Mammary epithelial cell (primary cell): ENCODE measurements at regions of chr1 and their contacts with region 1.

Region 1: DNA sequence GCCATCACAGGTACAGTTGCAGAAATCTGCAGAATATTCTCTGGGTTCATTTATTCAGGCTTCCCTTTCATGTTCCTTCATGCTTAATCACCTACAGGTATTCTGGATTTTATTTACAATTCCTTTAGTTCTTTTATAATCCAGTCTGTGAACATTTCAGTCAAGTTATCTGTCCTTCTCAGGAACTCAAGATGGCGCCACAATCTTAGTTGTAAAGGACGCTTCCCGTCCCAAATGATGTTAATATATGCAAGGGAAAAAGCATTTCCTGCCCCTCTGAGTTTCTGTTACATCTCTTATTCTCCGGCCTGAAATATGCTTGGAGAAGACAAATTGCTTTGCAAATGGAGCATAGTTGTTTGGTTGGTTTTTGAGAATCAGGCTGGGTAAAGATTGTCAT is 19.3 kb downstream of the F3 start:
- DNase-seq: peak; percentile 48
- H3K4me3 ChIP-seq: no peak overlapping the region
- H3K27ac ChIP-seq: no peak overlapping the region
- H3K4me1 ChIP-seq: no peaks in the 10 kb centered on the region
- H3K27me3 ChIP-seq: no peaks in the 10 kb centered on the region
- CTCF ChIP-seq: peak; percentile 43 to 57

Region 2: GRCh38 chr1:93827633-93828366 is 694.5 kb before region 1 on chr1:
- CTCF ChIA-PET with region 1: no interaction called
- dilution Hi-C with region 1: no loop called
- in situ Hi-C with region 1: no loop called
- intact Hi-C with region 1: no loop called
- DNase-seq: no peak
- H3K4me3 ChIP-seq: no peak overlapping the region
- H3K27ac ChIP-seq: no peak overlapping the region
- H3K4me1 ChIP-seq: peaks cover 28% of the 10 kb centered on the region
- H3K27me3 ChIP-seq: no peaks in the 10 kb centered on the region
- CTCF ChIP-seq: no peak

Region 3: GRCh38 chr1:94202241-94202640 is 320.1 kb before region 1 on chr1:
- CTCF ChIA-PET with region 1: no interaction called
- dilution Hi-C with region 1: no loop called
- in situ Hi-C with region 1: no loop called
- intact Hi-C with region 1: no loop called
- DNase-seq: peak; percentile 41
- H3K4me3 ChIP-seq: no peak overlapping the region
- H3K27ac ChIP-seq: no peak overlapping the region
- H3K4me1 ChIP-seq: peaks cover 6% of the 10 kb centered on the region
- H3K27me3 ChIP-seq: no peaks in the 10 kb centered on the region
- CTCF ChIP-seq: no peak

Region 4: GRCh38 chr1:94471271-94471670 is 51.0 kb before region 1 on chr1:
- CTCF ChIA-PET with region 1: no interaction called
- dilution Hi-C with region 1: loop called (anchors 10 kb)
- in situ Hi-C with region 1: no loop called
- intact Hi-C with region 1: no loop called
- DNase-seq: no peak
- H3K4me3 ChIP-seq: no peak overlapping the region
- H3K27ac ChIP-seq: no peak overlapping the region
- H3K4me1 ChIP-seq: no peaks in the 10 kb centered on the region
- H3K27me3 ChIP-seq: no peaks in the 10 kb centered on the region
- CTCF ChIP-seq: no peak

Region 5: DNA sequence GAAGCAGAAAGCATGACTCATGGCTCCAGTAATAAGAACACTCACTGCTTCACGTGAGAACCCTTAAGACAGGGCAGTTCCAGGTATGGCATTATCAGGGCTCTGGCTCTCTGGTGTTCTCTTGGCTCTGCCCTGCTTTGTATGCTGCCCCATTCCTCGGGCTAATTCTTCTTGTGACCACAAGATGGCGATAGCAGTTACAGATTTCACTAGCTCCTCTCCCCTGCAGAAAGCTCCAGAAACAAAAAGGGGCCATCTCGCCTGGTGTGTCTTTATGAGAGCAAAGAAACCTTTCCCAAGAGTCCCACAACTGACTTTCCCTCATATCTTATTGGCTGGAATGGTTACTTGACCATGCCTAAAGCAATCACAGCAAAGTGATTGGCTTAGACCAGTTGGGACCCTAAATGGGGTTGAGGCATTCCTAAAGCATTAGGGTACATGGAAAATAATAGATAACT is 40.8 kb before region 1 on chr1:
- CTCF ChIA-PET with region 1: interaction called, 5 read pairs
- dilution Hi-C with region 1: loop called (anchors 10 kb)
- in situ Hi-C with region 1: no loop called
- intact Hi-C with region 1: loop called (anchors 2 kb)
- DNase-seq: peak; percentile 82
- H3K4me3 ChIP-seq: no peak overlapping the region
- H3K27ac ChIP-seq: no peak overlapping the region
- H3K4me1 ChIP-seq: no peaks in the 10 kb centered on the region
- H3K27me3 ChIP-seq: no peaks in the 10 kb centered on the region
- CTCF ChIP-seq: peak; percentile 83 to 90

Region 6: DNA sequence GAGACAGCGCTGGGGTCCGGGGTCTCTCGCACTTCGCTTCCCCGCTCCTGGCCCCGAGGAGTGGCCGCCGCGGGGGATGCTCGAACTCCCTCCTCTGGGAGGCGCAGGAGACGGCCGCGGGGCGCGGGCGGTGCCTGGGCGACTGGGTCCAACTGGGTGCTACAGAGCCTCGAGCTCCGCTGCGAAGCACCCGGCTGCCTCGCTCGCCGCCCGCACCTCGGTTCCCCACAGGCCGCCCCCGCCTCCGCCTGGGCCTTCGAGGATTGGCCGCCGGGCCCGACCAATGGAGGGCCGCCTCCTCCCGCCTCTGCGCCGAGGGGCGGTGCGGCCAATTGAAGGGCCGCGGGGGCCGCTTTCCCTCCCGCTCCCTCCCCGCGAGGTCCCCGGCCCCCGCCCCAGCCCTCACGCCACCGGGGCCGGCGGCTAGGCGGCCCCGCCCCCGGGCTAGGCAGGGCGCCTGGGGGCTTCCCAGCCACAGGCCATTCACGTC is 404.7 kb after region 1 on chr1 and contains the start of gene CNN3:
- CTCF ChIA-PET with region 1: no interaction called
- dilution Hi-C with region 1: no loop called
- in situ Hi-C with region 1: no loop called
- intact Hi-C with region 1: loop called (anchors 5 kb)
- DNase-seq: peak; percentile 92
- H3K4me3 ChIP-seq: peak within 1 kb of the TSS; percentile 75 to 83 (median 79)
- H3K27ac ChIP-seq: peak within 1 kb of the TSS; percentile 79
- H3K4me1 ChIP-seq: peaks cover 24% of the 10 kb centered on the region
- H3K27me3 ChIP-seq: no peaks in the 10 kb centered on the region
- CTCF ChIP-seq: no peak
- total RNA-seq, gene CNN3: 136 to 244 TPM